ENCODE measurements at regions of chr3 and their contacts with region 1.

Region 1: DNA sequence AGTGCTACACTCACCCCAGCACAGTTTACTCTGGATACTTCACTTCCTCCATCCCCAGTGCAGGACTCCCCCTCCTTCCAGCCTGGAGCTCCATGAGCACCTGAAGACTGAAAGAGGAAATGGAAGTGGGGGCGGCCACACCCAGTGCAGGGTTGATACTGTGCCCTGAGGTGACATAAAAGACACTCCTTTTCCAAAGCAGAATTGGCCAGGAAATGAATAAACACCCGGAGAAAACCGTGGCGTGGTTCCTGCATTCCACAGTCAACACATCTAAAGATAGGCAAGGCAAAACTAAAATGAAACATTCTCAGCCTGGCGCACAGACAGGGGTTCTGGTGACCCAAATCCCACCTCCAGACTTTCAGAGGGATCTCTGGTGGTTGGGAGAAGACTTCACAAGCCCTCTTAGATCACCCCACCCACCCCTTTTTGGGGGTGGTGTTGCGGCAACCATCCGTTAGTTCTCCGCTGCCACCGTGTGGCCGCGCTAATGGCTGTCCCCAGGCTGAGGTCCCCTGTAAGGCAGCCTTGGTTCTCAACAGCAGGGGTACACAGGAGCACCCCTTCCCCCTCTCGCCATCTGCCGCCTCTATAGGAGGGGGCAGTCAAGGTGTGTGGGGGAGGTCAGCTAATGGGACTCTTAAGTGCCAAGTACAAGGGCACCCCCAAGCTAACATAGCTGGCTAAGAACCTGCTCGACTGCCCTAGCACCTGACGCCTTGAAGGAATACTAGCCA is 2.5 kb upstream of the MST1R start:
- DNase-seq: peak; percentile 66 to 80 (median 79)
- H3K4me3 ChIP-seq: peak overlapping the region in 5 of 7 experiments; percentile 23 to 70 (median 44)
- H3K27ac ChIP-seq: peak overlapping the region in 1 of 2 experiments; percentile 17
- H3K4me1 ChIP-seq: peaks cover 0 to 22% (median 20%) of the 10 kb centered on the region in 4 experiments
- H3K27me3 ChIP-seq: no peaks in the 10 kb centered on the region

Region 2: DNA sequence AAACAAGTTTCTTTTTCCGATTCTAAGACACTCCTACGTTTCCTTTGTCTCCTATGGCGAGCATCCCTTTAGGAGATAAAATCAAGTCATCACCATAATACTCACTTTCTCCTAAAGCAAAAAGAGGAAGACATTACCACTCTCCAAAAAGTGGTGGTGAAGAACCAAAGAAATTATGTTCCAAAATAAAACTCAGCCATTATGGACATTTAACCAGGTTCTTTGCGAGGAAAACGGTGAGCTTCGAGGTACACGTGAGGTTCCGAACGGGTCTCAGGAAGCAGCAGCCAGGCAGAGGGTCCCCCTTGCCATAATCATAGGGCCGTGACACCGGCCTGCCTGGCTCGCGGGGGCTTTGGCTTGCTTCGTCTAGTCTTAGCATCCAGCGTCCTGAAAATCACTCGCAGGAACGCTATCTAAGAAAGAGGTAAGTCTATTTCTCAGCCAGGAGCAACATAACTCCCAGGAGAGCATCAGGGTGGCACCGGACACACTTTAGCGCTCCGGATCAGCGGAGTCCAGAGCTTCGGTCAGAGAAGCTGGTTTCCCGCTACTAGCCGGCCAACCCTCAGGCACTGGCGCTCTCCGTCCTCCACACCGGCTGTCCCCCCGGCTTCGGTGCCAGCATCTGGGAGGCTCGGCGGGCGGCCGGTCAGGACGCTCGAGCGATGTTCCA is 120.5 kb before region 1 on chr3:
- CTCF ChIA-PET with region 1: no interaction called
- POLR2A ChIA-PET with region 1: no interaction called
- DNase-seq: peak in 2 of 3 donors; percentile 66 to 73
- H3K4me3 ChIP-seq: peak overlapping the region; percentile 67 to 93 (median 89)
- H3K27ac ChIP-seq: peak overlapping the region; percentile 94 to 96
- H3K4me1 ChIP-seq: peaks cover 5 to 40% (median 29%) of the 10 kb centered on the region in 4 experiments
- H3K27me3 ChIP-seq: no peaks in the 10 kb centered on the region

Region 3: GRCh38 chr3:49856181-49857005 is 49.8 kb before region 1 on chr3 and contains the start of gene TRAIP:
- CTCF ChIA-PET with region 1: interaction called, 16 read pairs
- POLR2A ChIA-PET with region 1: no interaction called
- DNase-seq: peak; percentile 93 to 96 (median 96)
- H3K4me3 ChIP-seq: peak within 1 kb of the TSS; percentile 68 to 90 (median 76)
- H3K27ac ChIP-seq: peak within 1 kb of the TSS; percentile 10 to 67
- H3K4me1 ChIP-seq: peaks cover 3 to 20% (median 14%) of the 10 kb centered on the region in 4 experiments
- H3K27me3 ChIP-seq: no peaks in the 10 kb centered on the region

Region 4: DNA sequence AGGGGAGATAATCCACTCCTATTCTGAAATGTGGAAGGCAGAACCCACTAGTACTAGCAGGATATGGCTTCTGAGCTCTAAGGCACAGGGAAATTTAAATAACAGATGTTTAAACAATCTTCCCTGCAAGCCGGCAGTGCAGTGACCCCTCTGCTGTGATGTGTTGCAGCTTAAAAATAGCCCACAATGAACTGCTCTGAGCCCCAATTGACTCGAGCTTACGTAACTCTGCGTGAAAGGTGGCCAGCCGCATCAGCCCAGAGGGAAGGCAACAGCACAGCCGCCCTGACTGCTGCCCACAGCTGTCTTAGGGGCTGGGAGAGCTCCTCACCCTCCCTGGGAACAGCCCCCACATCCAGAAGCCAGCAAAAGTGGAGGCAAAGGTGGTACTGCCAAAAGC is 24.0 kb before region 1 on chr3:
- CTCF ChIA-PET with region 1: interaction called, 10 read pairs
- POLR2A ChIA-PET with region 1: no interaction called
- DNase-seq: no peak
- H3K4me3 ChIP-seq: no peak overlapping the region
- H3K27ac ChIP-seq: no peak overlapping the region
- H3K4me1 ChIP-seq: peaks cover 0 to 6% (median 0%) of the 10 kb centered on the region in 4 experiments
- H3K27me3 ChIP-seq: no peaks in the 10 kb centered on the region

Region 5: DNA sequence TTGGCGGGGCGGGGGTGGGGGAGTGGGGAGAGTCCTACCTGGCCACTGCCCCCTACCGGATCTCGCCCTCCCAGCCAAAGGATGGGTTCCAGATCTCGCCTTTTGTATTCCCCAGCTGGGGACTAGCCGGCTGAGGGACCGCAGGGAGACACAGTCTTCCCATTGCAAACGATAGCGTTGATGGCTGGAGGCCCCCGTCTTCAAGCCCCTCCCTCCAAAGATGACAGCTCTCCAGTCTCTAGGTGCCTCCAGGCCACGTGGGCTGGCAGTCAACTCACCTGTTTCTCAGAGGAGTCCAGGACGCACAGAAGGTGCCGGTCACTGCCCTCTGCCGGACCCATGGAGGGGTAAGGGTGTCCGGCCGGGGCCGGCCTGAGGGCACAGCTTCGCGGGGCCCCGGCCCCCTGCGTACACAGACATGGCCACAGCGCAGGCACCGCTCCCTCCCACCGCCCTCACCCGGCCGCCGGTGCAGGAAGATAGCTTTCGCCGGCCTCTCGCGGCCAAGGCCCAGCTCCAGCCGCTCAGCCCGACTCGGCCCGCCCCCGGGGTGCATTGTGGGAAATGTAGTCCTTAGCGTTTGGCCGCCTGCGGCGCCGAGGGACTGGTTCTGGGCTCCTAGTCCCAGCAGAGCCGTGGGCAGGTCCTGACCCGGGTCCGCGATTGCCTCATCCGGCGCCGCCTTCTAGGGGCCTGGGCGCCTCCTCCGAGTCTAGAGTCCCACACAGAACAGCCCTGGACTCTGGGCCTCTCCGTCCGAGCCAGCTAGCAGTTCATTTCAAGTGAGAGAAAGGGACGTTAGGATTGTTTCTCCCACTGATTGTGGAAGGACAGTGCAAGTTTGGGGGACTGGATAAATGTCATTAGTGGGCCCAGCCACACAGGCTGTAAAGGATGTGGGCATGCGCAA is 23.4 kb after region 1 on chr3 and contains the start of gene MON1A:
- CTCF ChIA-PET with region 1: interaction called, 15 read pairs
- POLR2A ChIA-PET with region 1: interaction called, 3 read pairs
- DNase-seq: peak; percentile 81 to 87 (median 83)
- H3K4me3 ChIP-seq: peak within 1 kb of the TSS; percentile 53 to 94 (median 83)
- H3K27ac ChIP-seq: peak within 1 kb of the TSS in 1 of 2 experiments; percentile 70
- H3K4me1 ChIP-seq: peaks cover 0 to 23% (median 14%) of the 10 kb centered on the region in 4 experiments
- H3K27me3 ChIP-seq: no peaks in the 10 kb centered on the region

Measured in common myeloid progenitor, CD34-positive (primary cell).